Activated naive CD4-positive, alpha-beta T cell treated with anti-CD3 and anti-CD28 coated beads for 36 hours (primary cell): ENCODE measurements at regions of chr3 and their contacts with region 1.

Region 1: DNA sequence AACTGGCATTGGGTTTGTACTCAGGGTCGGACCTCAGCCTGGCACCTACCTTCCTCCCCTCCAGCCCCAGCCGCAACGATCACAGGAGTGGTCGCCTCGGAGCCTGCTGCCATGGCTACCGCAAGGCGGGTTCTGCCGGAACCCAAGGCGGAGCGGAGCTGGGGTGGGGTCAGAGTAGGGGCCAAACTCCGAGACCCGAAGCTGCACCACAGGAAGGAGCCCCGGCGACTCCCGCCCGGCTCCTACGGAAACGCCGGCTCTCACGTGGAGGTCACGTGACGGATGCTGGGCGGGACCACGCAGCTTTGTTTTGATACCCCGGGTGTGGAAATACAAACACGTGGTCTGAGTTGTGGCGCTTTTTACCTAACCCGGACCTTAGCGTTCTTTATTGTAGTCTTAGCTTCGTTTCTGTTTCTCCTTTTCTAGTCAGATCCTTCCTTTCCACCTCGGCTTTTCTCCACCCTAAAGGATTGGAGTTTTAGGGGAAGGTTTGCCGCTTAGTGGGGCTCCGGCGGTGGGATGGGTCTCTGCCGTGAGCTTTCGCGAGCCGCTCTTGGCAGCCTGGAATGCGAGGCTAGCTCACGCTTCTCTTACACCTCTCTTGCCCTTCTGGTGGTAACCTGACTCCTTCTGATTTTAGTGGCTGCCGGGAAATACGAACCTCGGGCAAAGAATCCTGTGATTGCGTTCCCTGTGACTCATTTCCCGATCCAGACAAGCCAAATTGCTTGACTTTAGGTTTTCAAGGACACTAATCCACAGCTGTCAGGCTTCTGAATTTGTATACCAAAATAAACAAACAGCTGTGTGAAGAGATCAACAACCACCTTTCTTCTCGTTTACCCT is at the start of gene HSPBAP1:
- DNase-seq: peak; percentile 92
- H3K4me3 Mint-ChIP-seq: peak within 1 kb of the TSS; percentile 86
- H3K27ac Mint-ChIP-seq: peak within 1 kb of the TSS; percentile 80
- H3K4me1 Mint-ChIP-seq: peaks cover 30% of the 10 kb centered on the region
- H3K27me3 Mint-ChIP-seq: no peaks in the 10 kb centered on the region
- total RNA-seq, gene HSPBAP1: 3.0 to 3.2 TPM

Region 2: DNA sequence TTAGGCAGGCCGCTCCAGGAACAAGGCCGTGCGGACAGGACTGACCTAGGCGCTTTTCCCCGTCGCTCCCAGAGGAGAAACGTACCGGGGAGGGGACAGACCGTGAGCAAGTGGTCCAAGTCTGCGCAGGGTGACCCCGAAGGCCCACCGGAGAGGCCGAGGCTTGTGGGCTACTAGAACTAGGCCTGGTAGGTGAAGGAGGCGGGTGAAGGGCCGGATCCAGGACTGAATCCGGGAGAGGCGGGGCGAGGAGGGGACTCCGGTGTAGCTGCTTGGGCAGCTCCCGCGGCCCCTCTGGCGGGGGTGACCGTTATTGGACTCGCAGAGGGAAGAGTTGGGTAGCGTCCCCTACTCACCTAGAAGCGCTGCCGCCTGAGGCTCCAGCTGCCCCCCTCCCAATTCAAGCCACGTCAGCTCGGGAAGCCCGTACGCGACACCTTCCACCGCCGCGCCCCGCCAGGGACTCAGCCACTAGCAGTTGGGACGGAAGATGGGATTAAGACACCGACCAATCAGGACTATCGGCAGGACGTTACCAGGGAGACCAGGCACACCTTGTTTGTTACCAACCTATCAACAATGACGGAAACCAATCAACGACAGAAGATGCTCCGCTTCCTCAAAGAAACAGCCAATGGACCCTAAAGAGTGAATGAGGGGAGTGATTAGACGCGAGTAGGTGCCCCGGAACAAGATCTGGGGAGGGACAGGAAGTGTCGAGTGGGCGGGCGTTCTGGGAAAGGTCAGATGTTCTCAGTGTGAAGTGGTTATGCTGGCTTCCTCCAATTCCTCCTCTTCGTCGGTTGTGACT is 1044.3 kb before region 1 on chr3 and contains the start of gene GOLGB1:
- CTCF ChIA-PET with region 1: no interaction called
- intact Hi-C with region 1: loop called (anchors 1 kb)
- DNase-seq: peak; percentile 97
- H3K4me3 Mint-ChIP-seq: no peak within 1 kb of the TSS
- H3K27ac Mint-ChIP-seq: no peak within 1 kb of the TSS
- H3K4me1 Mint-ChIP-seq: peaks cover 5% of the 10 kb centered on the region
- H3K27me3 Mint-ChIP-seq: no peaks in the 10 kb centered on the region
- total RNA-seq, gene GOLGB1: 18.2 to 19.7 TPM

Region 3: GRCh38 chr3:122890077-122890719 is 96.4 kb after region 1 on chr3:
- CTCF ChIA-PET with region 1: no interaction called
- intact Hi-C with region 1: loop called (anchors 2 kb)
- DNase-seq: peak; percentile 65
- H3K4me3 Mint-ChIP-seq: no peak overlapping the region
- H3K27ac Mint-ChIP-seq: peak overlapping the region; percentile 31
- H3K4me1 Mint-ChIP-seq: peaks cover 19% of the 10 kb centered on the region
- H3K27me3 Mint-ChIP-seq: no peaks in the 10 kb centered on the region